Colonic mucosa (tissue), 4 donors: ENCODE measurements at regions of chr6 and their contacts with region 1.

Region 1: GRCh38 chr6:123380257-123380656 is 256.5 kb downstream of the TRDN start:
- DNase-seq: no peak
- H3K4me3 ChIP-seq: no peak overlapping the region
- H3K27ac ChIP-seq: no peak overlapping the region
- H3K4me1 ChIP-seq: no peaks in the 10 kb centered on the region
- H3K27me3 ChIP-seq: no peaks in the 10 kb centered on the region
- CTCF ChIP-seq: no peak

Region 2: DNA sequence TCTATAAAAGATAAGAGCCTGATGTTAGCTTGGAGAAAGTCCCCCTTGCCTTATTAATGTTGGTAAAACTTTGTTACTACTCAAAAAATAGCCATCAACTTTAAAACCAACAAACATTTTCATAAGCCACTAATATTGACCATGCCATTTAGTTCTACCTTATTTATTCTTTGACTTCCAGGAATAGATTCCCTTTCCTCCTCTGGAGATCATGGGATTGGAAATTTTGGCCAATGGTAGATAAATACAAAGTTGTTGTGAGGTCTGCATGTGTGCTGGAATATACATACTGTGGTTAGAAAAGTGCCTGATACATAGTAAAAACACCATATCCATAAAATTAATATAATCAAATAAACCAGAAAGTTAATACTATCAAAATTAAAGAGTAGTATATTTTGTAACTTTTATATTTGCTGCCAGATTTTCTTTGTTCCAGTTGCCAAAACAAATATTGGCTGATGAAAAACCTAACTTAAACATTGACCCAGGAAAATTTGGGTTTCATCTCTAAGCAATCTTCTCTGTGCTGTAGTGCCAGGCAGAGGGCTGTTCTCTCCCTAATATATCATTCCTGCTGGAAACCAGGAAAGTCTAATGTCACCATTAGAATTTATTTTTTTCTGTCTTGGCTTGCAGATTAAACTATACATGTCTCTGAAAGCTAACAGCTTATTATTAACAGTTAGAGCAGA is 592.5 kb after region 1 on chr6:
- intact Hi-C with region 1: loop called (anchors 10 kb)
- DNase-seq: no peak
- H3K4me3 ChIP-seq: no peak overlapping the region
- H3K27ac ChIP-seq: no peak overlapping the region
- H3K4me1 ChIP-seq: no peaks in the 10 kb centered on the region
- H3K27me3 ChIP-seq: no peaks in the 10 kb centered on the region
- CTCF ChIP-seq: no peak